ENCODE measurements at regions of chr7 and their contacts with region 1.

Region 1: DNA sequence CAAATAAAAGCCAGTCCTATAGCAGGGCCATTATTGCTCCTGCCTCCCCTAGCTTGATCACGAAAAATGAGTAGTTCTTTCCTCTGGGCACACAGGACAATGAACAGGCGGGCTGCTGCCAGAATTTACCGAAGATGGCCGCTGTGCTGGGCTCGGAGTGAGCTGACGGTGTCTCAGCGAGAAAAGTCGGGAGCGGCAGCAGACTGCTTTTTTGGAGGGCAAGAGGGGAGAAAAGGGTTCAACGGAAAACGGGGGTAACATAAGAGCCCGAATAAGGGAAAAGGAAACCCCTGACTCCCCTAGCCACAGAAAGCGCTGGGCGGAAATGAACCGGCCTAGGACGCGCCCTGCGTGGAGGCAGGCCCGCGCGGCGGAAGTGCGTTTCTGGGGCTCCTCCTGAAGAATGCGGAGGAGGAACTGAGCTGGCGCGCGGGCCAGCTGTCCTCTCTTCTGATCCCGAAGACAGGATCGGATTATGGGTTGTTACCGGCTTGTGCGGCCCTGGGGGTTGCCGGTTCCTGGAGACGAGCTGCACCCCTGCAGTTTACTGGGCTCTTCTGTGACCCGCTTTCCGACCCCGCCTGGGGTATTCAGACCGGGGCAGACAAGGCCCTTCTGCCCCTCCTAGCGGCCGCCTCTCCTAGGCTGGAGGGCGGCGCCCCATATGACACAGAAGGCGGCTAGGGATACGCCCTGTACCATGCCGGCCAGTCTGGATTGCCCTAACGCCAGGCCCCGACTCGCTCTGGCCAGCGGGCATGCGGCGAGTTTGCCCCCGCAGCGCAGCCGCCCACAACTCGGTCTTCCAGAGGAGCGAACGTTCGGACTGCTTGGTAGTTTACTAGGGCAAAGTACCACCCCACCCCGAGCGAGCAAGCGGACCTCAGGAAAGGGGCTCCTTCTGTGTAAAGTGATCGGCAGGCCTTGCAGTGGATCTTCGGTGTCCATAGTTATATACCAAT is 30.1 kb upstream of the KMT2E start:
- DNase-seq: peak; percentile 83
- ATAC-seq: peak; percentile 94
- H3K4me3 Mint-ChIP-seq: peak overlapping the region; percentile 98
- H3K27ac Mint-ChIP-seq: peak overlapping the region; percentile 100
- H3K4me1 Mint-ChIP-seq: peaks cover 74% of the 10 kb centered on the region
- H3K27me3 Mint-ChIP-seq: no peaks in the 10 kb centered on the region
- CTCF ChIP-seq: peak; percentile 11; the same call in 1 of the 2 replicates

Region 2: GRCh38 chr7:104971290-104972071 is 12.4 kb before region 1 on chr7:
- CTCF ChIA-PET with region 1: interaction called, 15 read pairs
- POLR2A ChIA-PET with region 1: interaction called, 3 read pairs
- DNase-seq: no peak
- ATAC-seq: peak; percentile 48; the same call in 1 of the 2 replicates
- H3K4me3 Mint-ChIP-seq: no peak overlapping the region
- H3K27ac Mint-ChIP-seq: no peak overlapping the region
- H3K4me1 Mint-ChIP-seq: peaks cover 6% of the 10 kb centered on the region; the same call in 1 of the 2 replicates
- H3K27me3 Mint-ChIP-seq: no peaks in the 10 kb centered on the region
- CTCF ChIP-seq: no peak

Region 3: GRCh38 chr7:105013221-105013815 is 29.5 kb after region 1 on chr7:
- CTCF ChIA-PET with region 1: interaction called, 34 read pairs
- POLR2A ChIA-PET with region 1: interaction called, 29 read pairs
- DNase-seq: peak; percentile 93
- ATAC-seq: peak; percentile 65
- H3K4me3 Mint-ChIP-seq: peak overlapping the region; percentile 99
- H3K27ac Mint-ChIP-seq: peak overlapping the region; percentile 100
- H3K4me1 Mint-ChIP-seq: peaks cover 42% of the 10 kb centered on the region
- H3K27me3 Mint-ChIP-seq: no peaks in the 10 kb centered on the region
- CTCF ChIP-seq: peak; percentile 11; the same call in 1 of the 2 replicates

Region 4: DNA sequence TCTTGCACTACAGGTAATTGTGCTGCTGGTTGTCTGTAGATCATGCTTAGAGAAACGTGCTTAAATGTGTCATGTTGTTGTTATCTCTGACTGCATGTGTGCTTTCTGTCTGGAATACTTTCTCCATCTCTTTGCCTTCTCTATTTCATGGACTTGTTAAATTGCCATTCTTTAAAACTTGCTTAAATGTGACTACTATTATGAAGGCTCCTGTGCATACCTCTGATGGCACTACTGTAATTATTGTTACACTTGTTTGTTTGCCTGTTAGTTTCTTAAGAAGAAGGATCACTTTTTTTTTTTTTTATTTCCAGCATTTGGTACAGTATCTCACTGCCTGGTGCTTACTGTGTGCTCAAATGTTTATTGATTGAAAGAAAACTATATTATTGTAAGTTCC is 71.8 kb after region 1 on chr7:
- CTCF ChIA-PET with region 1: no interaction called
- POLR2A ChIA-PET with region 1: no interaction called
- DNase-seq: no peak
- ATAC-seq: no peak
- H3K4me3 Mint-ChIP-seq: no peak overlapping the region
- H3K27ac Mint-ChIP-seq: peak overlapping the region; percentile 91
- H3K4me1 Mint-ChIP-seq: peaks cover 28% of the 10 kb centered on the region
- H3K27me3 Mint-ChIP-seq: no peaks in the 10 kb centered on the region
- CTCF ChIP-seq: no peak

Region 5: DNA sequence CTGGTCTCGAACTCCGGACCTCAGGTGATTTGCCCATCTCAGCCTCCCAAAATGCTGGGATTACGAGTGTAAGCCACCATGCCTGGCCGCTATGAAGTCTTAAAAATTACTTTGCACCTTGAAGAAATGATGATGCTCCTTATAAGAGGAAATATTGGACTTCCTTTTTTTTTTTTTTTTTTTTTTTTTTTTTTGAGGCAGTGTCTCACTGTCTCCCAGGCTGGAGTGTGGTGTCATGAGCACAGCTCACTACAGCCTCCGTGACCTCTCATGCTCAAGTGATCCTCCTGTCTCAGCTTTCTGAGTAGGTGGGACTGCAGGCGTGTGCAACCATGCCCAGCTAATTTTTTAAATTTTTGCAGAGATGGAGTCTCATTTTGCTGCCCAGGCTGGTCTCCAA is 95.5 kb after region 1 on chr7:
- CTCF ChIA-PET with region 1: no interaction called
- POLR2A ChIA-PET with region 1: no interaction called
- DNase-seq: no peak
- ATAC-seq: no peak
- H3K4me3 Mint-ChIP-seq: no peak overlapping the region
- H3K27ac Mint-ChIP-seq: no peak overlapping the region
- H3K4me1 Mint-ChIP-seq: no peaks in the 10 kb centered on the region
- H3K27me3 Mint-ChIP-seq: no peaks in the 10 kb centered on the region
- CTCF ChIP-seq: no peak

Measured in WTC11 (cell line).